Activated CD4-positive, alpha-beta memory T cell treated with anti-CD3 and anti-CD28 coated beads for 36 hours (primary cell): ENCODE measurements at regions of chr16 and their contacts with region 1.

Region 1: GRCh38 chr16:30657866-30658730 is at the start of gene FBRS:
- DNase-seq: peak; percentile 100
- H3K4me3 Mint-ChIP-seq: peak within 1 kb of the TSS; percentile 96
- H3K27ac Mint-ChIP-seq: peak within 1 kb of the TSS; percentile 100
- H3K4me1 Mint-ChIP-seq: peaks cover 38% of the 10 kb centered on the region
- H3K27me3 Mint-ChIP-seq: no peaks in the 10 kb centered on the region
- total RNA-seq, gene FBRS: 91.8 to 95.6 TPM

Region 2: GRCh38 chr16:30065143-30065850 is 592.8 kb before region 1 on chr16 and contains the start of gene ALDOA:
- CTCF ChIA-PET with region 1: no interaction called
- POLR2A ChIA-PET with region 1: interaction called, 3 read pairs
- intact Hi-C with region 1: loop called (anchors 10 kb)
- DNase-seq: peak; percentile 98
- H3K4me3 Mint-ChIP-seq: peak within 1 kb of the TSS; percentile 97
- H3K27ac Mint-ChIP-seq: peak within 1 kb of the TSS; percentile 99
- H3K4me1 Mint-ChIP-seq: peaks cover 34% of the 10 kb centered on the region
- H3K27me3 Mint-ChIP-seq: no peaks in the 10 kb centered on the region
- total RNA-seq, gene ALDOA: 1,724 to 1,734 TPM

Region 3: GRCh38 chr16:30609926-30610839 is 47.9 kb before region 1 on chr16 and contains the start of gene ZNF689:
- CTCF ChIA-PET with region 1: no interaction called
- POLR2A ChIA-PET with region 1: interaction called, 3 read pairs
- intact Hi-C with region 1: loop called (anchors 2 kb)
- DNase-seq: peak; percentile 98
- H3K4me3 Mint-ChIP-seq: peak within 1 kb of the TSS; percentile 89
- H3K27ac Mint-ChIP-seq: peak within 1 kb of the TSS; percentile 94
- H3K4me1 Mint-ChIP-seq: peaks cover 15% of the 10 kb centered on the region
- H3K27me3 Mint-ChIP-seq: no peaks in the 10 kb centered on the region
- total RNA-seq, gene ZNF689: 8.7 to 9.9 TPM

Region 4: DNA sequence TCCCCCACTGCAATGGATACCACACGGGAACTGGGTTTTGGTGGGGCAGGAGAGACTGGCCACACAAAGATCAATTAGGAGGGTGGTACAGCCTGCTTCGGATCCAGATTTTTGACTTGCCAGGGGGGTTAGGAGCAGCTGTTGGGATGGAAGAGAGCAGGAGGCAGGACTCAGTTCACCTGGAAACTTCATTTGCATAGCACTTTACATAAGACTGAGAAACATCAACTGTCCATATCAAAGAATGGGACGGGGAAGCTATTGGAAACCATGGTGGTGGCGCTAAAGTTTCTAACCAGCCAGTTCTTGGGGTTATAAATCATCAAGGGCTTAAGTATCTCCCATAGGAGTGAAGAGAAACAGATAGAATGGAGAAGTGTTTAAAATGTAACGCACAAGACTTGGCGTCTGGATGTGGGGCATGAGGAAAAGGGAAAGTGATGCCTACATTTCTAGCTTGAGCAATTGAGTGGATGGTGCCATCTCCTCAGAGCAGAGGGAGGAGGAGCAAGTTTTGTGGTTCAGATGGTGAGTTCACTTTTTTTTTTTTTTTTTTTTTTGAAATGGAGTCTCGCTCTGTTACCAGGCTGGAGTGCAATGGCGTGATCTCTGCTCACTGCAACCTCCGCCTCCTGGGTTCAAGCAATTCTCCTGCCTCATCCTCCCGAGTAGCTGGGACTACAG is 34.4 kb after region 1 on chr16:
- CTCF ChIA-PET with region 1: interaction called, 86 read pairs
- POLR2A ChIA-PET with region 1: interaction called, 13 read pairs
- intact Hi-C with region 1: loop called (anchors 1 kb)
- DNase-seq: no peak
- H3K4me3 Mint-ChIP-seq: no peak overlapping the region
- H3K27ac Mint-ChIP-seq: peak overlapping the region; percentile 38
- H3K4me1 Mint-ChIP-seq: peaks cover 15% of the 10 kb centered on the region
- H3K27me3 Mint-ChIP-seq: no peaks in the 10 kb centered on the region

Region 5: DNA sequence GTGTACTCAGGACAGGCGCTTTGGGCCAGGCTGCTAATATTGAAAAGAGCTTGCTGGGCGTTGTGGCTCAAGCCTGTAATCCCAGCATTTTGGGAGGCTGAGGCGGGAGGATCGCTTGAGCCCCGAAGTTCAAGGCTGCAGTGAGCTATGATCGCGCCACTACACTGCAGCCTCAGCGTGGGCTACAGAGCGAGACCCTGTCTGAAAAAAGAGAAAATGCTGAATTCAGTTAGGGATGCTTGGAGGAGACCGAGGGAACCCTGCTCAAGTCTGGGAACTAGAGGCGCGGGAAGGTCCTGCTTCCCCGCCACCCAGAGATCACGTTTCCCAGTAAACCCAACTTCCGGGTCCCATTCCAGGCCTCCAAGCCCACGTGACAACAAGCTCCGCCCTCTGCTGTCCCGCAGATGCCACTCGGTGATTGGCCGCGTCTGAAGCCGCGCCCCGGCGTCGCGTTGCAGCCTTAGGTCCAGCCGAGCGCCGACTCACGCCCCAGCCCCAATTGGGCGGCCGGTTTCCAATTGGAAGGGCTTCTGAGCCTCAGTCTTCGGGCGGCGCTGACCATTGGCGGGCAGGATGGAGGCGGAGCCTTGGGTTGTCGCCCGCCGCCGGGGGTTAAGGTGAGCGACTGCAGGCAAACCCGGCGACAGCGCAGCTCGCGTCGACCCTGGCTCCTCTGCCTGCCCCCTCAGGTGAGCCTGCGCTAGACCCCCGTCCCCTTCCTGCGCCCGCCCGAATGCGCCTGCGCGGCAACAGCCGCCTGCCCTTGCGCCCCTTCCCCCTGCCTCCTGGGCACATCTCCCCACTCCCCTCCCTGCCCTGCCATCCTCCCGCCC is 89.9 kb after region 1 on chr16 and contains the start of gene PHKG2:
- CTCF ChIA-PET with region 1: interaction called, 5 read pairs
- POLR2A ChIA-PET with region 1: no interaction called
- intact Hi-C with region 1: loop called (anchors 5 kb)
- DNase-seq: peak; percentile 99
- H3K4me3 Mint-ChIP-seq: peak within 1 kb of the TSS; percentile 91
- H3K27ac Mint-ChIP-seq: peak within 1 kb of the TSS; percentile 77
- H3K4me1 Mint-ChIP-seq: peaks cover 23% of the 10 kb centered on the region
- H3K27me3 Mint-ChIP-seq: no peaks in the 10 kb centered on the region
- total RNA-seq, gene PHKG2: 24.1 to 27.9 TPM

Region 6: DNA sequence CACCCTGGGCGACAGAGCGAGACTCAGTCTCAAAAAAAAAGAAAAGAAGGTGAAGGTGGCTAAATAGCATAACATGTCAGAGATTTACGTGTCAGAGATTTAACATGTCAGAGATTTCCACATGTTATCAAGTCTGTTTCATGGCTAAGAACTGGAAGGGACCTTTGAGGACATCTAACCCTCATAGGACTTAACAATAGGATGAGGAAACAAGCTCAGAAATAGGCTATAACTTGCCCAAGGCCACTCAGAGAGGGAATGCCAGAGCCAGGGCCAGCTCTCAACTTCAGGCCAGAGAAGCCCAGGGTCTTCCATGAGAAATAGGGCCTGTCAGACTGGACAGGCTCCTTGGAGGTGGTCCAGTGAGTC is 155.7 kb after region 1 on chr16:
- CTCF ChIA-PET with region 1: no interaction called
- POLR2A ChIA-PET with region 1: interaction called, 3 read pairs
- intact Hi-C with region 1: loop called (anchors 1 kb)
- DNase-seq: no peak
- H3K4me3 Mint-ChIP-seq: peak overlapping the region; percentile 84
- H3K27ac Mint-ChIP-seq: peak overlapping the region; percentile 72
- H3K4me1 Mint-ChIP-seq: peaks cover 11% of the 10 kb centered on the region
- H3K27me3 Mint-ChIP-seq: no peaks in the 10 kb centered on the region

Region 7: GRCh38 chr16:31458844-31459721 is 801.0 kb after region 1 on chr16 and contains the start of gene ARMC5:
- CTCF ChIA-PET with region 1: no interaction called
- POLR2A ChIA-PET with region 1: no interaction called
- intact Hi-C with region 1: loop called (anchors 5 kb)
- DNase-seq: peak; percentile 98
- H3K4me3 Mint-ChIP-seq: peak within 1 kb of the TSS; percentile 87
- H3K27ac Mint-ChIP-seq: peak within 1 kb of the TSS; percentile 94
- H3K4me1 Mint-ChIP-seq: peaks cover 48% of the 10 kb centered on the region
- H3K27me3 Mint-ChIP-seq: no peaks in the 10 kb centered on the region
- total RNA-seq, gene ARMC5: 5.5 to 6.4 TPM